T-cell (primary cell): ENCODE measurements at regions of chr2 and their contacts with region 1.

Region 1: GRCh38 chr2:231104115-231104713 is 20.6 kb downstream of the HTR2B start:
- DNase-seq: peak in 34 of 35 experiments; percentile 6 to 72 (median 42)
- ATAC-seq: peak; percentile 65 to 77 (median 72)
- H3K4me3 ChIP-seq: no peak overlapping the region
- H3K4me3 Mint-ChIP-seq: no peak overlapping the region
- H3K27ac ChIP-seq: no peak overlapping the region
- H3K27ac Mint-ChIP-seq: no peak overlapping the region
- H3K4me1 ChIP-seq: no peaks in the 10 kb centered on the region
- H3K4me1 Mint-ChIP-seq: peaks cover 0 to 4% (median 2%) of the 10 kb centered on the region in 3 donors
- H3K27me3 ChIP-seq: no peaks in the 10 kb centered on the region
- H3K27me3 Mint-ChIP-seq: no peaks in the 10 kb centered on the region

Region 2: DNA sequence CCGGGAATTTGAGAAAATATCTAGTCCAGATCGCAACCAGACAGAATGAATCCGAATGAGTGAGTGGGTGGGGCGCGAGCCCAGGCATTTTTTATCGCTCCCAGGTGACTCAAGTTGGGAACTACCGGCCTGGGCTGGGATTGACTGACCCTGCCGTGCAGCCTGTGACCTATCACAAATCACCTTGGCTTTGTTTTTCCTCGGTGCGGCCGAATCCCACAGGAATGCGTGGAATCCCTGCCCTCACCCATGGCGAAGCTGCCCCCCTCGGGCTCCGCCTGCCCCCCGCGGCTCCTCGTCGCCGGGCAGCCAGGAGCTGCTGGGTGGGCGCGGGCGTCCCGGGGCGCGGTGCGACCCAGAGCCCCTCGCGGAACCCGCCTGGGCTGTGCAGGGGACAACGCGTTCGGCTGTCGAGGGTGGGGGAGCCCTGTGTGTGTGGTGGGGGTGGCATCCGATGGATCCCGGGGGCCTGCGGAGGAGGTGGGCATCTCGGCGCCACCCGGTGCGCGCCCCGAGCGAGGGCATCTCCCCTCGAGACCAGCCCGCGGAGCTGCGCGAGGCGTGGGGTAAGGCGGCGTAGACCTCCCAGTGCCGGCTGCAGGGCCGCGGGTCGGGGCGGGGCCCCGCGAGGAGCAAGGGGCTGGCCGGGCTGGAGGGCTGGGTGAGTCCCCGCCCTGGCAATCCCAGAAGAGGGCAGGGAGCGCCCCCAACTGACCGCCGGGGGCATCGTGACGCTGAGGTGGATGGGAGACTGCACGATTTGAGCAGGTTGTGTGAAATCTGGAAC is 307.8 kb after region 1 on chr2:
- CTCF ChIA-PET with region 1: interaction called, 5 to 11 read pairs
- POLR2A ChIA-PET with region 1: no interaction called
- DNase-seq: peak in 34 of 35 experiments; percentile 14 to 76 (median 58)
- ATAC-seq: peak; percentile 92 to 98 (median 96)
- H3K4me3 ChIP-seq: peak overlapping the region in 1 of 2 donors; percentile 67
- H3K4me3 Mint-ChIP-seq: peak overlapping the region; percentile 62 to 67 (median 66)
- H3K27ac ChIP-seq: no peak overlapping the region
- H3K27ac Mint-ChIP-seq: no peak overlapping the region
- H3K4me1 ChIP-seq: peaks cover 5 to 11% of the 10 kb centered on the region in 2 experiments
- H3K4me1 Mint-ChIP-seq: peaks cover 0 to 9% (median 9%) of the 10 kb centered on the region in 3 donors
- H3K27me3 ChIP-seq: peaks cover 0 to 56% of the 10 kb centered on the region in 2 experiments
- H3K27me3 Mint-ChIP-seq: peaks cover 38 to 42% of the 10 kb centered on the region in 2 donors